ENCODE measurements at regions of chr15 and their contacts with region 1.

Region 1: DNA sequence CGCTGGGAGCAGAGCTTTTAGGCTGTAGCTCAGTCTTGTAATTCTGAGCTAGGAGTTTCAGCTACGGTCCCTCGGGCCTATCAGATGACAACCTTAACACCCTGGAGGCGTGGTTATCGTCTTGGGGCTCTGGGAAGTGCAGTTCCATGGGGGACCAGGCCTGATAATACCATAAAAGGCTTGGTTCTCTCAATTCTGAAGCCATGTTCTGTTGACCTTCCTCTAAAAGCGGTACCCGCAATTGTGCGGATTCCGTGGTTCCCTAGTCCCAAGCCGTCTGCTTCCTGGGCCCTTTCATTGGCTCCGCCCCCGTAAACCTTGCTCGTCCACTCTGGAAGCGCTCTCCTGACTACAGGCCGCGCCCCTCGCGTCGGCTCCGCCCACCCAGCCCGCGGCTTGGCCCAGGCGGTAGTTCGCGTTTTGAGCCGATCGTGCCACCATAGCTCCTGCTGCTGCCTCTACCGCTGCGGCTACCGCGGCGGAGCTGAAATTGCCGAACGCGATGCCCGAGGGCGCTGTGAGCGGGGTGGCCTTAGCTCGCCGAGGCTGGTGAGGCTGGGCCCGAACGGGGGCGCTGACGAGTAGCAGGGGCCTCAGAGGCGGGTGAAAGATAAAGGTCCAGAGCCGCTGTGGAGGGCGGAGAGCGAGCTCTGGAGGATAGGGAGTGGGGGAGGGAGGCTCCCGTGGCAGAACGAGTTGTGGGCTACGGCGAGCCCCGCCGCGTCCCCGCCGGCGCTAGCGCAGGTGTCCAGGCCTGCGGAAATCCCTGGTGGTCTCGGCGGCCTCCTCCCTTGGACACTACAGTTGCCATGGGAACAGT is at the start of gene MAPKBP1:
- DNase-seq: peak; percentile 92 to 99 (median 97)
- ATAC-seq: peak; percentile 88
- H3K4me3 ChIP-seq: peak within 1 kb of the TSS; percentile 89
- H3K4me3 Mint-ChIP-seq: peak within 1 kb of the TSS; percentile 96
- H3K27ac ChIP-seq: peak within 1 kb of the TSS; percentile 57 to 72
- H3K27ac Mint-ChIP-seq: peak within 1 kb of the TSS; percentile 83
- H3K4me1 ChIP-seq: peaks cover 46% of the 10 kb centered on the region
- H3K4me1 Mint-ChIP-seq: peaks cover 65% of the 10 kb centered on the region
- H3K27me3 ChIP-seq: no peaks in the 10 kb centered on the region
- H3K27me3 Mint-ChIP-seq: no peaks in the 10 kb centered on the region
- CTCF ChIP-seq: peak; percentile 70
- total RNA-seq, gene MAPKBP1: 26.0 to 30.0 TPM

Region 2: DNA sequence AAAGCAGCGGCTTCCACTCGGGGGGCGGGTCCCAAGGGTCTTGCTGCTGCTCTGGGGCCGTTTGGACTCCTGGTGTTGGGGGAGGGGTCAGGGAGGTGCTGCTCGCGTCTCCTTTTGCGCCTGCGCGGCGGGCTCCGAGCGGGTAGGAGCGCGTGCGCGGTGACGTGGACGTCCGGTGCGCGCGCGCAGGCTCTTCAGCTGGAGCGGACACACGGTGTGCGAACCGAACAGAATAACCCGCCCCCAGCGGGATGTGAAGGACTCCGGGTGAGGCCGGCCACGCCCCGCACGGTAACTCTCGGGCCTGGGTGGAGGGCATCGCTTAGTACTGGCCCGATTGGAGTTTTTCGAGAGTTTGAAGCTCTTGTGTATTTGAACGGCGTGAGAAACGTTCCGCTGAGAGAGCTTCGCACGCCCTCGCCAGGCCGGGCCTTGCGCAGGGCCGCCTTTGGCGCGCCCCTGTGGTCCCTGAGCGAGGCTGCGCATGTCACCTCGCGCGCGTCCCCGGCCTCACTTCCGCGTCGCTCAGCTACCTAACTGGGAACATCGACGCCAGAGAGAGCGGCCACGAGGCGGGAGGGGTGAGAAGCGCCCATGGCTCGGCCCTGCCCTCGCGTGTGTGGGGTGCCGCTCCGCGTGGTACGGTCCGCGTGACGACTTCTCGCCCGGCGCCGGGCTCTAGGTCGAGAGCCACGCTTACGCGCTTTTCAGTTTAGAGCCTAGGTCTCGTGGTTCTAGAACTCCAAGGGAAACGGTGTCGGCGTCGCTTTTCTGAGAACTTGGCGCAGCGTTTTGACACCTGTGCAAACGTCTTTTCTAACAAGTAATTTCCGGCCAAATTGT is 113.8 kb before region 1 on chr15 and contains the start of gene MGA:
- CTCF ChIA-PET with region 1: no interaction called
- POLR2A ChIA-PET with region 1: interaction called, 8 read pairs
- intact Hi-C with region 1: loop called in 1 of 2 experiments (anchors 5 kb)
- DNase-seq: peak; percentile 77 to 96 (median 89)
- ATAC-seq: peak; percentile 79
- H3K4me3 ChIP-seq: peak within 1 kb of the TSS; percentile 65
- H3K4me3 Mint-ChIP-seq: peak within 1 kb of the TSS; percentile 83
- H3K27ac ChIP-seq: peak within 1 kb of the TSS; percentile 81 to 91
- H3K27ac Mint-ChIP-seq: peak within 1 kb of the TSS; percentile 89
- H3K4me1 ChIP-seq: peaks cover 32% of the 10 kb centered on the region
- H3K4me1 Mint-ChIP-seq: peaks cover 66% of the 10 kb centered on the region
- H3K27me3 ChIP-seq: no peaks in the 10 kb centered on the region
- H3K27me3 Mint-ChIP-seq: no peaks in the 10 kb centered on the region
- CTCF ChIP-seq: no peak
- total RNA-seq, gene MGA: 31.0 to 33.9 TPM

Region 3: DNA sequence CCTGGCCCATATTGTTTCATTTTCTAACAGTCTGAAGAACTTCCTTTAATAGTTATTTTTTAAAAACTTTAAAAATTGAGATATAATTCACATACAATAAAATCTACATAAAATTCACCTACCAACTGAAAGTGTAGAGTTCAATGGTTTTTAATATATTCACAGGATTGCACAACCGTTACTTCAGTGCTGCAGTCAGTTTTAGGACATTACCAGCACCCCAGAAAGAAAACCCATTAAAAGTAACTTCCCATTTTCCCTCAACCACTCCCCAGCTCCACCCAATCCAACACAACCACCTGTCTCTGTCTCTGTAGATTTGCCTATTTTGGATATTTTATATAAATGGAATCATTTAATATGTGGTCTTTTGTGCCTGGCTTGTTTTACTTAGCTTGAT is 84.4 kb before region 1 on chr15:
- CTCF ChIA-PET with region 1: no interaction called
- POLR2A ChIA-PET with region 1: no interaction called
- intact Hi-C with region 1: no loop called
- DNase-seq: peak in 2 of 14 experiments; percentile 14 to 16
- ATAC-seq: no peak
- H3K4me3 ChIP-seq: no peak overlapping the region
- H3K4me3 Mint-ChIP-seq: no peak overlapping the region
- H3K27ac ChIP-seq: no peak overlapping the region
- H3K27ac Mint-ChIP-seq: peak overlapping the region; percentile 75
- H3K4me1 ChIP-seq: peaks cover 11% of the 10 kb centered on the region
- H3K4me1 Mint-ChIP-seq: peaks cover 78% of the 10 kb centered on the region
- H3K27me3 ChIP-seq: no peaks in the 10 kb centered on the region
- H3K27me3 Mint-ChIP-seq: no peaks in the 10 kb centered on the region
- CTCF ChIP-seq: no peak

Region 4: GRCh38 chr15:41703120-41703519 is 71.2 kb before region 1 on chr15:
- CTCF ChIA-PET with region 1: no interaction called
- POLR2A ChIA-PET with region 1: no interaction called
- intact Hi-C with region 1: no loop called
- DNase-seq: no peak
- ATAC-seq: no peak
- H3K4me3 ChIP-seq: no peak overlapping the region
- H3K4me3 Mint-ChIP-seq: no peak overlapping the region
- H3K27ac ChIP-seq: no peak overlapping the region
- H3K27ac Mint-ChIP-seq: peak overlapping the region; percentile 33
- H3K4me1 ChIP-seq: no peaks in the 10 kb centered on the region
- H3K4me1 Mint-ChIP-seq: peaks cover 12% of the 10 kb centered on the region
- H3K27me3 ChIP-seq: no peaks in the 10 kb centered on the region
- H3K27me3 Mint-ChIP-seq: no peaks in the 10 kb centered on the region
- CTCF ChIP-seq: no peak

Region 5: GRCh38 chr15:41811432-41812195 is 37.3 kb after region 1 on chr15:
- CTCF ChIA-PET with region 1: interaction called, 91 read pairs
- POLR2A ChIA-PET with region 1: interaction called, 39 read pairs
- intact Hi-C with region 1: loop called (anchors 1 kb)
- DNase-seq: peak; percentile 62 to 88 (median 70)
- ATAC-seq: peak; percentile 97
- H3K4me3 ChIP-seq: no peak overlapping the region
- H3K4me3 Mint-ChIP-seq: no peak overlapping the region
- H3K27ac ChIP-seq: no peak overlapping the region
- H3K27ac Mint-ChIP-seq: peak overlapping the region; percentile 43
- H3K4me1 ChIP-seq: peaks cover 19% of the 10 kb centered on the region
- H3K4me1 Mint-ChIP-seq: peaks cover 12% of the 10 kb centered on the region
- H3K27me3 ChIP-seq: no peaks in the 10 kb centered on the region
- H3K27me3 Mint-ChIP-seq: no peaks in the 10 kb centered on the region
- CTCF ChIP-seq: peak; percentile 92

Region 6: DNA sequence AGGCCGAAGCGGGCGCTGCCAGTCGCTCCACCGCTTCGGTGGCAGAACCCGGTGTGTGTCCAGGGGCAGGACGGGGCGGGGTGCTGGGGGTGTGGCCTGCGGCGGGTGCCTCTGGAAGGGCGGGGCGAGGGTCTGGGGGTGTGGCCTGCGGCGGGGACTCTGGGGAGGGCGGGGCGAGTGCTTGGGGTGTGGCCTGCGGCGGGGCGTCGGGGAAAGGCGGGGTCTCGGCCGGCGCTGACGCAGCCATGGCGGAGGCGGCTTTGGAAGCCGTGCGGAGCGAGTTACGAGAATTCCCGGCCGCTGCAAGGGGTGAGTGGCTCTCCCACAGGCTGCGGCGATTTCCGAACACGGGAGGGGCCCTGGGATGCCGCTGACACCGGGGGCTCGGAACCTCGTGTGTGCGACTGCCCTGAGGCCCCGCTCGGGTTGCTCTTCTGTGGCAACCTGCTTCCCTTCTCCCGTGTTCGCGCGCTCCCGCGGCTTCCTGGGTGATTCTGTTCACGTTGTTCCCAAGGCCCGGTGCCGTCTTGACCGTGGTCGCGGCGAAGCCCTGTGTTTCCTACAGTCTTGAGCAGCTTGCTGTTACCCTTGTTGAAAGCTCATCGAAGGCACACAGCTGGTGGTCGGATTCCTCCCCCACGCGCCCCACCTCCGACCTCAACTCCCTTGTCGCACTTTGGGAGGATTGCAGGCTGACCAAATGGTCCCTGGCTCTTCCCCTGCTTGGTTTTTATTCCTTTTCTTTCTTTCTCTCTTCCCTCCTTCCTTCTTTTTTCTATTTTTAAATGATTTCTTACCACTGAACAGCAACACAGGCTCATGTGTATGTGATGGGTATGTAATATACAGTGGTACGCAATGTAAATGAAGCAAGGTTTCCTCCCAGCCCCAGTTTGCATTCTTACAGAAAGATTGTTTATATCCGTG is 53.9 kb after region 1 on chr15 and contains the start of gene JMJD7:
- CTCF ChIA-PET with region 1: interaction called, 19 read pairs
- POLR2A ChIA-PET with region 1: interaction called, 25 read pairs
- intact Hi-C with region 1: loop called (anchors 1 to 2 kb)
- DNase-seq: peak; percentile 92 to 99 (median 96)
- ATAC-seq: peak; percentile 94
- H3K4me3 ChIP-seq: peak within 1 kb of the TSS; percentile 92
- H3K4me3 Mint-ChIP-seq: peak within 1 kb of the TSS; percentile 90
- H3K27ac ChIP-seq: peak within 1 kb of the TSS; percentile 53 to 64
- H3K27ac Mint-ChIP-seq: peak within 1 kb of the TSS; percentile 87
- H3K4me1 ChIP-seq: peaks cover 52% of the 10 kb centered on the region
- H3K4me1 Mint-ChIP-seq: peaks cover 30% of the 10 kb centered on the region
- H3K27me3 ChIP-seq: no peaks in the 10 kb centered on the region
- H3K27me3 Mint-ChIP-seq: no peaks in the 10 kb centered on the region
- CTCF ChIP-seq: no peak
- total RNA-seq, gene JMJD7: 35.6 to 38.4 TPM

Region 7: GRCh38 chr15:41839781-41840491 is 65.7 kb after region 1 on chr15:
- CTCF ChIA-PET with region 1: no interaction called
- POLR2A ChIA-PET with region 1: no interaction called
- intact Hi-C with region 1: no loop called
- DNase-seq: no peak
- ATAC-seq: no peak
- H3K4me3 ChIP-seq: no peak overlapping the region
- H3K4me3 Mint-ChIP-seq: no peak overlapping the region
- H3K27ac ChIP-seq: no peak overlapping the region
- H3K27ac Mint-ChIP-seq: no peak overlapping the region
- H3K4me1 ChIP-seq: peaks cover 10% of the 10 kb centered on the region
- H3K4me1 Mint-ChIP-seq: peaks cover 7% of the 10 kb centered on the region
- H3K27me3 ChIP-seq: no peaks in the 10 kb centered on the region
- H3K27me3 Mint-ChIP-seq: no peaks in the 10 kb centered on the region
- CTCF ChIP-seq: no peak

Region 8: GRCh38 chr15:41894791-41895463 is 120.7 kb after region 1 on chr15:
- CTCF ChIA-PET with region 1: interaction called, 18 read pairs
- POLR2A ChIA-PET with region 1: interaction called, 10 read pairs
- intact Hi-C with region 1: loop called in 1 of 2 experiments (anchors 2 kb)
- DNase-seq: peak; percentile 79 to 95 (median 90)
- ATAC-seq: peak; percentile 93
- H3K4me3 ChIP-seq: peak overlapping the region; percentile 36
- H3K4me3 Mint-ChIP-seq: peak overlapping the region; percentile 83
- H3K27ac ChIP-seq: peak overlapping the region; percentile 85 to 92
- H3K27ac Mint-ChIP-seq: peak overlapping the region; percentile 100
- H3K4me1 ChIP-seq: peaks cover 52% of the 10 kb centered on the region
- H3K4me1 Mint-ChIP-seq: peaks cover 58% of the 10 kb centered on the region
- H3K27me3 ChIP-seq: no peaks in the 10 kb centered on the region
- H3K27me3 Mint-ChIP-seq: no peaks in the 10 kb centered on the region
- CTCF ChIP-seq: no peak

Region 9: GRCh38 chr15:41904541-41905005 is 130.3 kb after region 1 on chr15:
- CTCF ChIA-PET with region 1: interaction called, 42 read pairs
- POLR2A ChIA-PET with region 1: interaction called, 13 read pairs
- intact Hi-C with region 1: loop called (anchors 1 kb)
- DNase-seq: peak; percentile 63 to 85 (median 71)
- ATAC-seq: peak; percentile 88
- H3K4me3 ChIP-seq: no peak overlapping the region
- H3K4me3 Mint-ChIP-seq: no peak overlapping the region
- H3K27ac ChIP-seq: no peak overlapping the region
- H3K27ac Mint-ChIP-seq: peak overlapping the region; percentile 80
- H3K4me1 ChIP-seq: peaks cover 10% of the 10 kb centered on the region
- H3K4me1 Mint-ChIP-seq: peaks cover 7% of the 10 kb centered on the region
- H3K27me3 ChIP-seq: no peaks in the 10 kb centered on the region
- H3K27me3 Mint-ChIP-seq: no peaks in the 10 kb centered on the region
- CTCF ChIP-seq: peak; percentile 95

Region 10: GRCh38 chr15:42056934-42057779 is 282.9 kb after region 1 on chr15:
- CTCF ChIA-PET with region 1: interaction called, 5 read pairs
- POLR2A ChIA-PET with region 1: no interaction called
- intact Hi-C with region 1: loop called (anchors 2 kb)
- DNase-seq: peak in 13 of 14 experiments; percentile 15 to 82 (median 35)
- ATAC-seq: peak; percentile 81
- H3K4me3 ChIP-seq: peak overlapping the region; percentile 36
- H3K4me3 Mint-ChIP-seq: peak overlapping the region; percentile 61
- H3K27ac ChIP-seq: no peak overlapping the region
- H3K27ac Mint-ChIP-seq: peak overlapping the region; percentile 31
- H3K4me1 ChIP-seq: peaks cover 22% of the 10 kb centered on the region
- H3K4me1 Mint-ChIP-seq: peaks cover 14% of the 10 kb centered on the region
- H3K27me3 ChIP-seq: peaks cover 19 to 23% of the 10 kb centered on the region in 2 experiments
- H3K27me3 Mint-ChIP-seq: peaks cover 39% of the 10 kb centered on the region
- CTCF ChIP-seq: peak; percentile 31